Spleen (tissue), 13 donors: ENCODE measurements at regions of chr3 and their contacts with region 1.

Region 1: GRCh38 chr3:148379763-148380382 is 317.8 kb upstream of the AGTR1 start:
- DNase-seq: no peak
- H3K4me3 ChIP-seq: no peak overlapping the region
- H3K27ac ChIP-seq: no peak overlapping the region
- H3K4me1 ChIP-seq: no peaks in the 10 kb centered on the region
- H3K27me3 ChIP-seq: no peaks in the 10 kb centered on the region
- CTCF ChIP-seq: peak in 9 of 11 experiments; percentile 14 to 51 (median 32)
- POLR2A ChIP-seq: no peak

Region 2: GRCh38 chr3:148727247-148727646 is 347.4 kb after region 1 on chr3:
- intact Hi-C with region 1: loop called (anchors 10 kb)
- DNase-seq: no peak
- H3K4me3 ChIP-seq: no peak overlapping the region
- H3K27ac ChIP-seq: peak overlapping the region in 1 of 8 donors; percentile 6
- H3K4me1 ChIP-seq: peaks cover 0 to 18% (median 0%) of the 10 kb centered on the region in 6 donors
- H3K27me3 ChIP-seq: no peaks in the 10 kb centered on the region
- CTCF ChIP-seq: peak in 6 of 11 experiments; percentile 23 to 42 (median 30)
- POLR2A ChIP-seq: no peak

Region 3: DNA sequence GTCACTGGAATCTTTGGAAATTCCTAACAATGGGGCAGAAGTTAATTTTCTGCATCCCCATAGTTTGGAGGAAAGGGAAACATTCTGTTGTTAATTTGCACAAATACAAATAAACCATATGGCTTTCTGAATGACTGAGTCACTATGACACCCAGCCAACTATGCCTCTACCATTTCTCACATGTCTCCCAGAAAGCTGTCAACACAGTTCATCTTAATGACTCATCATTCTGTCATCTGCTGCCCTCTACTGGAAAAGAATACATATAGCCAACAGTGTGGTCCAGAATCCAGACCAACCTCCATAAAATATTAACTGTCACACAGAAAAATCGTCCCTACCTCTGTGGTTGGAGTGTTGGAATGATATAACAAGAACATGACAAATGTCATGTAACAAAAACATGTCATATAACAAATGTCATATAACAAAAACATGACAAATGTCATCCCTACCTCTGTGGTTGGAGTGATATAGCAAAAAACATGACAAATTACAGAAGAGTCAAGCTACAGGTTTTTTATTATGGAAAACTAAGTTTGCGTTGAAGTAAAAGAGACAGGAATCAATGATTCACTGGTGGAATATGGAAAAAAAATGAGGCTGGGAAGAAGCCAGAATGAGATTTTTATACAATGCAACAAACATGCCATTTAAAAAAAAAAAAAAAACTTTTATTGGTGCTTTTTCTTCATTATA is 563.8 kb after region 1 on chr3:
- intact Hi-C with region 1: loop called (anchors 10 kb)
- DNase-seq: no peak
- H3K4me3 ChIP-seq: no peak overlapping the region
- H3K27ac ChIP-seq: no peak overlapping the region
- H3K4me1 ChIP-seq: no peaks in the 10 kb centered on the region
- H3K27me3 ChIP-seq: no peaks in the 10 kb centered on the region
- CTCF ChIP-seq: peak; percentile 39 to 82 (median 70)
- POLR2A ChIP-seq: no peak